ENCODE measurements at regions of chr1 and their contacts with region 1.

Region 1: DNA sequence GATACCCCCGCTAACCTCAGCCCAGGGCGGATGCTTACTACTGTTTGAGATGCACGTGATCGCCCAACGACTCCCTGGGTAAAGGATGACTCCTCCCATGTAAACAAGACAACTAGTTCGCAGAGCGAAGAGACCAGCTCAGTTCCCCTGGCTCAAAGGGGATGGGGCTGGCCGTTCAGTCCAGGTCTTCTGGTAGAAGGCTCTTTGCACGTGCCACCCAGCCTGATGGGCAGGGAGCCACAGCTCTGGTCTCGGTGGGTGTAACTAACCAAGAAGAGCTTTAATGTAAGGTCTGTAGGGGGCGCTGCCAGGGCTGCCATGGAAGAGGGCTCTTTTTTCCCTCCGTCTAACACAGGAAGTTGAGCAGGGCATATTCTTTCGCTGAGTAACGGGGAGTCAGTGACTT is 49.4 kb upstream of the PARP1 start:
- DNase-seq: peak; percentile 46 to 79
- H3K4me3 ChIP-seq: no peak overlapping the region
- H3K27ac ChIP-seq: no peak overlapping the region
- H3K4me1 ChIP-seq: no peaks in the 10 kb centered on the region; a peak in 3 of 7 replicates
- H3K27me3 ChIP-seq: no peaks in the 10 kb centered on the region
- CTCF ChIP-seq: peak; percentile 58 to 85 (median 68)
- EP300 ChIP-seq: no peak
- POLR2A ChIP-seq: no peak
- RAD21 ChIP-seq: peak; percentile 33 to 65; a peak in 3 of 4 replicates

Region 2: DNA sequence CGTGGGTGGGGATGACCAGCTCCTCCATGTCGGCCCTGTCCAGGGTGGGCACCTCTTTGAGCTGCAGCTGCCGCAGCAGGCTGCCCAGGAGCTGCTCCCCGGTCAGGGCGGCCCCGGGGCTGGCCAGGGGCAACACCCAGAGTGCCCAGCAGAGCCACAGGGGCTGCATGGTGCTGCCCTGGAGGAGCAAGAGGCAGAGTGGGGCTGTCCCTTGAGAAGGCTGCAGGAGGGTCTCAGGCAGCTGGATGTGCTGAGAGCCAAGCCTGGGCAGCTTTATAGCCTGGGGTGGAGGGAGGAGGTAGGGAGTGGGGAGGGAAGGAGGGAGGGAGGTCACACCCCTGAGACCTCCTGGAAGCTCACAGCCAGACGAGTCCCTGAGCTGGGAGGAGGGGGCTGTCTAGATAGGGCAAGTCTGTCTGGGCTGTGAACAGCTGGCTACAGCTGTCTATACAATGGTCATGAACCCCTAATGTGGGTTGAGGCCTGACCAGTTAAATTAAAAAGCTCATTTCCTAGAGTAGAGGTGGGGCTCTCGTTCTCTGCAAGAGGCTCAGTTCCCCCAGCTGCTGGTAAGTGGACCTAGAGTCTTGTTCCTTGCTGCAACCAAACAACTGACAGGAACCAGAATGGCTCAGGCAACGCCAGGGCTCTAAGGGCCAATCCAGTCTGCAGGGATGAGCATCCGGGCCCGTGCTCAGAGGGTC is 568.3 kb before region 1 on chr1 and contains the start of gene LEFTY1:
- CTCF ChIA-PET with region 1: no interaction called
- POLR2A ChIA-PET with region 1: no interaction called
- DNase-seq: no peak
- H3K4me3 ChIP-seq: peak within 1 kb of the TSS in 1 of 4 experiments; percentile 41; a peak in 1 of 8 replicates
- H3K27ac ChIP-seq: no peak within 1 kb of the TSS
- H3K4me1 ChIP-seq: peaks cover 10 to 34% (median 22%) of the 10 kb centered on the region in 4 experiments
- H3K27me3 ChIP-seq: peaks cover 0 to 14% (median 6%) of the 10 kb centered on the region in 4 experiments; a peak in 4 of 7 replicates
- CTCF ChIP-seq: no peak
- EP300 ChIP-seq: no peak
- POLR2A ChIP-seq: no peak
- RAD21 ChIP-seq: no peak
- total RNA-seq, gene LEFTY1: 8.4 and 11.7 TPM in 2 replicates

Region 3: GRCh38 chr1:226444901-226445300 is 12.4 kb before region 1 on chr1:
- CTCF ChIA-PET with region 1: interaction called, 28 read pairs
- POLR2A ChIA-PET with region 1: interaction called, 3 read pairs
- DNase-seq: no peak
- H3K4me3 ChIP-seq: no peak overlapping the region
- H3K27ac ChIP-seq: no peak overlapping the region
- H3K4me1 ChIP-seq: peaks cover 0 to 9% (median 8%) of the 10 kb centered on the region in 4 experiments; a peak in 6 of 7 replicates
- H3K27me3 ChIP-seq: no peaks in the 10 kb centered on the region
- CTCF ChIP-seq: peak; percentile 29 to 32 (median 30)
- EP300 ChIP-seq: no peak
- POLR2A ChIP-seq: no peak
- RAD21 ChIP-seq: no peak; a peak in 1 of 4 replicates

Region 4: GRCh38 chr1:226474443-226475141 is 17.3 kb after region 1 on chr1:
- CTCF ChIA-PET with region 1: interaction called, 45 read pairs
- POLR2A ChIA-PET with region 1: interaction called, 5 read pairs
- DNase-seq: no peak
- H3K4me3 ChIP-seq: no peak overlapping the region
- H3K27ac ChIP-seq: no peak overlapping the region
- H3K4me1 ChIP-seq: peaks cover 4 to 10% (median 8%) of the 10 kb centered on the region in 4 experiments; a peak in 4 of 7 replicates
- H3K27me3 ChIP-seq: peaks cover 0 to 4% (median 0%) of the 10 kb centered on the region in 4 experiments; a peak in 1 of 7 replicates
- CTCF ChIP-seq: peak in 2 of 3 experiments; percentile 6 to 24; a peak in 2 of 4 replicates
- EP300 ChIP-seq: no peak
- POLR2A ChIP-seq: no peak
- RAD21 ChIP-seq: peak; percentile 29 to 33; a peak in 3 of 4 replicates

Region 5: DNA sequence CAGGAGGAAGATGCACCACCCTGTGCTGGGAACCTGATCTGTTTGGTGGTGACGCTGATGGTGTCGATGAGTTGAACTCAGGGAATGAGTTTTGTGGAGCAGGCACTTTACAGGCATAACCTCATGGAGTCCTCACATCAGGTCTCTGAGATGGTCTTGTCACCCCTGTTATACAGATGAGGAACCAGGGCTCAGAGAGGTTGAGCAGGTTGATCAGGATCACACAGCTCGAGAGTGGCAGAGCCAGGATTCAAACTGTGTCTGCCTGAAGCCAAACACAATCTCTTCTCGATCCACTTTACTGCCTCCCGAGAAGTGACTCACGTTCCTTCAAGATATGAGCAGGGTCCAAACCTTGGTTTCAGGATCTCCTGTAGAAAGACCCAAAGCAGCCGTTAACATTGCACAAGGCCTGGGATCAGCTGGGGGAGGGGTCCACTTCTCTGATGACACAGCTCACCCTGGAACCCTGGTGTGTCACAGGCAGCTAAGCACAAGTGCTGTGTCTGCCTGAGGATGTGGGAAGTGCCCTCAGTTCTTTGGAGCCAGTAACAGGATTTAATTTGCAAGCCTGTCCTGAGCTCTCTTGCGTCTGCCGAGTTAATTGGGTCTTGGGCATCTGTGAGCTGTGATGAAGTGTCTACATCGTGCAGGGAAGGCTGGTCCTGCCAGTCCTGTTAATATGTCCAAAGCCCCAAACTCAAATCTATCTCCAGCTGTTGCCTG is 25.8 kb after region 1 on chr1:
- CTCF ChIA-PET with region 1: interaction called, 21 read pairs
- POLR2A ChIA-PET with region 1: no interaction called
- DNase-seq: no peak
- H3K4me3 ChIP-seq: no peak overlapping the region
- H3K27ac ChIP-seq: no peak overlapping the region
- H3K4me1 ChIP-seq: no peaks in the 10 kb centered on the region
- H3K27me3 ChIP-seq: no peaks in the 10 kb centered on the region
- CTCF ChIP-seq: no peak
- EP300 ChIP-seq: no peak
- POLR2A ChIP-seq: no peak
- RAD21 ChIP-seq: no peak

Region 6: GRCh38 chr1:226510453-226510852 is 53.1 kb after region 1 on chr1:
- CTCF ChIA-PET with region 1: interaction called, 10 read pairs
- POLR2A ChIA-PET with region 1: no interaction called
- DNase-seq: no peak
- H3K4me3 ChIP-seq: no peak overlapping the region
- H3K27ac ChIP-seq: no peak overlapping the region
- H3K4me1 ChIP-seq: no peaks in the 10 kb centered on the region
- H3K27me3 ChIP-seq: no peaks in the 10 kb centered on the region
- CTCF ChIP-seq: no peak
- EP300 ChIP-seq: no peak
- POLR2A ChIP-seq: no peak
- RAD21 ChIP-seq: no peak

Region 7: DNA sequence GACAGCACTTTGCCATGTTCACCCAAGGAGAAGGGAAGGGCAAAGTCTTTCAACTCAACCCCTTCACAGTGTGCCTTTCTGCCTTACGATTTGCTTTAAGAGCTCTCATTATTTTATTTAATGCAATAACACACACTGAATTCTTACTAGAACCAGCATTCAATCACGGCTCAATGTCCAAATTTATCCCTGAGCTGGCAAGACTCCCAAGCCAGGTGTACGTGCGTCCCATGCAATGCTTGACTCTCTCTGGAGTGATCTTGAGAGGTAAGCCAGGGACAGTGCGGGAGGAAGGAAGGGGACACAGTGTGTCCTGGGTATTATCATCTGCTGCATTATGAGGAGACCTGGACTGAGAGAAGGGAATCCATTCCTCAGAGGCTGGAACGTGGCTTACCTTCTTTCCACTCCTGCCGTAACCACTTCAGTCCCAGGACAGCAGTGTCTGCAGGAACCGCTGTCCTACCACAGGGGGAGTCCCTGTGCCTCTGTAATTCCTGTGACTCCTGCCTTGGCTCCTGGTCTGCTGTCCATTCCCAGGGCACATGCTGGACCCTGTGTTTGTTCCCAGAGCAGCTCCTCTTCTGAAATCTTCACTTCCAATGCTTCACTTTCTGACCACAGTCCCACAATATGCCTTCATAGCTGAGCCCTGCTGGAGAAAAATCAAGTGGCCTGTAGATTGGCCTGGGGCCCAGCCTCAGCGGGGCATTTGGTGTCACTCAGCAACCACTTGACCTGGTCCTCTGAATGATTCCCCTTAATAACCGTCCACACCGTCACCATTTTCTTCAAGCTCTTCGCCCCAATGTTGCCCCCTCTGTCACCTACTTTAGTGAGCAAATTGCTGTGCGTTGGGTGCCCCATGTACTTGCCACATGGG is 62.6 kb after region 1 on chr1:
- CTCF ChIA-PET with region 1: interaction called, 12 read pairs
- POLR2A ChIA-PET with region 1: no interaction called
- DNase-seq: no peak
- H3K4me3 ChIP-seq: peak overlapping the region in 3 of 4 experiments; percentile 26 to 30 (median 30); a peak in 4 of 8 replicates
- H3K27ac ChIP-seq: no peak overlapping the region
- H3K4me1 ChIP-seq: peaks cover 6 to 22% (median 9%) of the 10 kb centered on the region in 4 experiments
- H3K27me3 ChIP-seq: peaks cover 0 to 3% (median 0%) of the 10 kb centered on the region in 4 experiments; a peak in 2 of 7 replicates
- CTCF ChIP-seq: peak; percentile 51 to 76 (median 76)
- EP300 ChIP-seq: no peak
- POLR2A ChIP-seq: no peak
- RAD21 ChIP-seq: peak; percentile 39 to 65; a peak in 3 of 4 replicates

Region 8: GRCh38 chr1:226547754-226548191 is 90.5 kb after region 1 on chr1:
- CTCF ChIA-PET with region 1: interaction called, 11 read pairs
- POLR2A ChIA-PET with region 1: no interaction called
- DNase-seq: peak; percentile 80 to 81
- H3K4me3 ChIP-seq: peak overlapping the region in 2 of 4 experiments; percentile 13 to 62; a peak in 5 of 8 replicates
- H3K27ac ChIP-seq: no peak overlapping the region
- H3K4me1 ChIP-seq: peaks cover 3 to 24% (median 14%) of the 10 kb centered on the region in 4 experiments
- H3K27me3 ChIP-seq: peaks cover 10 to 50% (median 46%) of the 10 kb centered on the region in 4 experiments
- CTCF ChIP-seq: peak; percentile 85 to 96 (median 93)
- EP300 ChIP-seq: peak in 1 of 2 experiments; percentile 29; a peak in 1 of 3 replicates
- POLR2A ChIP-seq: no peak
- RAD21 ChIP-seq: peak; percentile 85 to 92

Measured in H1 (cell line).